ENCODE measurements at regions of chr5 and their contacts with region 1.

Region 1: GRCh38 chr5:142548739-142549275 is 137.1 kb downstream of the FGF1 start:
- DNase-seq: peak; percentile 87
- H3K4me3 ChIP-seq: no peak overlapping the region
- H3K27ac ChIP-seq: no peak overlapping the region
- H3K4me1 ChIP-seq: peaks cover 16% of the 10 kb centered on the region
- H3K27me3 ChIP-seq: no peaks in the 10 kb centered on the region
- CTCF ChIP-seq: peak; percentile 85 to 91

Region 2: GRCh38 chr5:142024771-142025304 is 524.0 kb before region 1 on chr5:
- CTCF ChIA-PET with region 1: no interaction called
- dilution Hi-C with region 1: no loop called
- in situ Hi-C with region 1: loop called in 1 of 2 experiments (anchors 25 kb)
- intact Hi-C with region 1: no loop called
- DNase-seq: peak; percentile 78
- H3K4me3 ChIP-seq: peak overlapping the region; percentile 20 to 35 (median 26)
- H3K27ac ChIP-seq: peak overlapping the region; percentile 20
- H3K4me1 ChIP-seq: peaks cover 7% of the 10 kb centered on the region
- H3K27me3 ChIP-seq: no peaks in the 10 kb centered on the region
- CTCF ChIP-seq: no peak

Region 3: DNA sequence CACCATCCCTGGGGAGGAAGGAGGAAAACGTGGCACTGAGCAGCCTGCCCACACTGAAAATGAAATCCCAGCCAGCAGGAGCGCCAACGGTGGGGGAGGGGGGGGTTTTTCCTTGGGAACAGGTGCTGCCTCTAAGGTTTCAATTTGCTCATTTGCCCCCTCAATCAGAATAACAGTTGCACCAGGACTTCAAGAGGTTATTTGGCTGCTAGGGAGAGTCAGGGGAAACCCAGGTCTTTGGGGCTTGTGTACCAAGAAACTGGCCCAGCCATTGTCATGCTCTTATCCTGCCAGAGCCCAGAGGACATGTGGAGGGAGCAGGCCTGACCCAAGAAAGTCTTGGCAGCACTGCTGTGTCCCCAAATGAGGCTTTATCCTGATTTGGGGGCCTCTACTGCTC is 373.8 kb before region 1 on chr5:
- CTCF ChIA-PET with region 1: no interaction called
- dilution Hi-C with region 1: loop called (anchors 10 kb)
- in situ Hi-C with region 1: loop called (anchors 5 to 10 kb)
- intact Hi-C with region 1: no loop called
- DNase-seq: no peak
- H3K4me3 ChIP-seq: no peak overlapping the region
- H3K27ac ChIP-seq: no peak overlapping the region
- H3K4me1 ChIP-seq: peaks cover 17% of the 10 kb centered on the region
- H3K27me3 ChIP-seq: no peaks in the 10 kb centered on the region
- CTCF ChIP-seq: no peak

Region 4: GRCh38 chr5:142356716-142357473 is 191.9 kb before region 1 on chr5:
- CTCF ChIA-PET with region 1: no interaction called
- dilution Hi-C with region 1: loop called (anchors 10 kb)
- in situ Hi-C with region 1: no loop called
- intact Hi-C with region 1: loop called (anchors 1 kb)
- DNase-seq: peak; percentile 79
- H3K4me3 ChIP-seq: peak overlapping the region; percentile 52 to 69 (median 65)
- H3K27ac ChIP-seq: peak overlapping the region; percentile 59
- H3K4me1 ChIP-seq: peaks cover 20% of the 10 kb centered on the region
- H3K27me3 ChIP-seq: no peaks in the 10 kb centered on the region
- CTCF ChIP-seq: no peak

Region 5: GRCh38 chr5:142422429-142422828 is 126.4 kb before region 1 on chr5:
- CTCF ChIA-PET with region 1: interaction called, 3 read pairs
- dilution Hi-C with region 1: no loop called
- in situ Hi-C with region 1: no loop called
- intact Hi-C with region 1: loop called (anchors 1 kb)
- DNase-seq: peak; percentile 53
- H3K4me3 ChIP-seq: no peak overlapping the region
- H3K27ac ChIP-seq: no peak overlapping the region
- H3K4me1 ChIP-seq: peaks cover 20% of the 10 kb centered on the region
- H3K27me3 ChIP-seq: no peaks in the 10 kb centered on the region
- CTCF ChIP-seq: no peak

Region 6: DNA sequence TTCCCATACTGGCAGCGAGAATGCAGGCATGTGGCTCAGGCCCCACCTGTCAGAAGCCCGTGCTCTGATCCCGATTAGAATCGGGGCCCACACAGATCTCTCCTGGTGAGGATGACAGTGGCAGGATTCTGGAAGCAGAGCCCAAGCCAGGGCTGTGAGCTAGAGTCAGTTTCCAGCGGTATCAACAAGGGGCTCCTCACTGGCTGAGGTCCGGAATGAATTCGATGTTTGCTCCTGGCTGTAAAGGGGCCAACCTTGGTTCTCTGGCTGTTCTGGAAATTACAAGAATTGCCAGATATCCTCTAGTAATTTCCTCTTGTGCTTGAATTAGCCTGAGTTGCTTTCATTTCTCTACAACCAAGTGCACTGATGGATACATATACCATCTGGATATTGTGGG is 94.9 kb before region 1 on chr5:
- CTCF ChIA-PET with region 1: no interaction called
- dilution Hi-C with region 1: no loop called
- in situ Hi-C with region 1: no loop called
- intact Hi-C with region 1: no loop called
- DNase-seq: no peak
- H3K4me3 ChIP-seq: no peak overlapping the region
- H3K27ac ChIP-seq: no peak overlapping the region
- H3K4me1 ChIP-seq: no peaks in the 10 kb centered on the region
- H3K27me3 ChIP-seq: no peaks in the 10 kb centered on the region
- CTCF ChIP-seq: no peak

Region 7: DNA sequence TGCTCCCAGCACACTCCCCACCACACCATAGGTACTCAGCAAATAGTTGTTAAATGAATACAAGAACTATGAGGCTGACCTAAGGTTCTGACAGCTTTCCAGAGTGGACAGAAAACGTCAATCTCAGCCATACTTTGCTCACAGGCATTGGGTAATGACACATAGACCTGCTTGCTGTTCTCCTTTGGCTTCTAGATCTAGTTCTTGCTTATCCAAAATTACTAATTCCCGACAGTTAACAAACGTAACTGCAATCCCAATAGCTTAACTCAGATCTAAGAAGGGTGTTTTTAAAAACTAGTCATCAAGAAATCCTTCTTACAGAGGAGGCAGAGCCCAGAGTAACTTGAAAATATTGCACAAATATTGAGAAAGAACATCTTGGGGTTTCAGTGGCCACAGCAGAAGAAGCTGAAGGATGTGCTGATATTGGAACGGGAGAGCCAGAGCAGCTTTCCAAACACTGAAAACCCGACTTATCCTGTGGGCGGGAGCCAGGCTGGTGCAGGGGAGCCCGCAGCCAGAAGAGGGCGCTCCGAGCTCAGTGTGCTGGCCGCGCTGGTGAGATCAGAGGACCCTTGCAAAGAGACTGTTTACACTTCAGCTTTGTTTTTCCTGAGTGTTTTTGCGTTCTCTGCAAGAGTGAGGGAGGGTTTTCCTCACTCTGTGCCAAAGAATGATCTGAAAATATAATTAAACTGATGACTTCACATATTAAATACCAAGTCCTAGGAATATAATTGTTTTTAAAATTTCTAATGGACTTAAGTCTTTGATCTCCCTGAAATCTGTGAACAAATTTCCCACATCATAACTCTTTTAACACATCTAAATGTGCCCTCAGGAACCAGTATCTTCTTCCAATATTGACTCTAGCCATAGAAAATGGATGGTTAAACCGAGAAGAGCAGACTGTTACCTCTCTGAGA is 106.8 kb after region 1 on chr5:
- CTCF ChIA-PET with region 1: no interaction called
- dilution Hi-C with region 1: no loop called
- in situ Hi-C with region 1: no loop called
- intact Hi-C with region 1: no loop called
- DNase-seq: peak; percentile 52
- H3K4me3 ChIP-seq: no peak overlapping the region
- H3K27ac ChIP-seq: no peak overlapping the region
- H3K4me1 ChIP-seq: no peaks in the 10 kb centered on the region
- H3K27me3 ChIP-seq: no peaks in the 10 kb centered on the region
- CTCF ChIP-seq: peak; percentile 96 to 100

Region 8: DNA sequence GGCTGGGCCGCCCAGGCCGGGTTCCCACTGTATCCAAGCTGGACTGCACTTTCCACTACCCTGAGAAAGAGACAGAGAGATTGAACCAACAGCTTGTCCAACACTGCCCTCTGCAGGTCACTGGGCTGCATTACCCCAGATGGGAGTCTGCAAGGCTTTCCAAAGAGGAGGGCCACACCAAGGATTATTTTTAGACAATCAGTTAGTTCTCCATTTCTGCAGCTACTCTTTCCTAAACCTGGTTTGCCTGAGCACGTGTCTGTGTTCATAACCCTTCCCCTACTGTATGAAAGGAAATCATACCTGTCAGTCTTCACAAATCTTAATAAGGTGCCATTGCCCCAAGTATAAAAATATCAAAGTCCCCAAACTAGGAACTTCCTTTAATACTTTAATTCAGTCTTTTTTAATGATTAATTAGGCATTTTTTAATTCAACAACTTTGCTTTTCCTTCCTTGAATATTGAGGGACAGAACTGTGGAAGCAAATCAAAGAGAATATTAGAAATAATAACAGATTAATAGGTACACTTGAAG is 150.4 kb after region 1 on chr5:
- CTCF ChIA-PET with region 1: no interaction called
- dilution Hi-C with region 1: no loop called
- in situ Hi-C with region 1: no loop called
- intact Hi-C with region 1: loop called (anchors 1 kb)
- DNase-seq: peak; percentile 68
- H3K4me3 ChIP-seq: no peak overlapping the region
- H3K27ac ChIP-seq: no peak overlapping the region
- H3K4me1 ChIP-seq: peaks cover 10% of the 10 kb centered on the region
- H3K27me3 ChIP-seq: no peaks in the 10 kb centered on the region
- CTCF ChIP-seq: peak; percentile 98 to 99